A673 (cell line): ENCODE measurements at regions of chr19 and their contacts with region 1.

Region 1: GRCh38 chr19:49640113-49640898 is at the start of gene RRAS:
- DNase-seq: peak; percentile 100
- H3K4me3 ChIP-seq: peak within 1 kb of the TSS; percentile 59
- H3K27ac ChIP-seq: peak within 1 kb of the TSS; percentile 98
- H3K4me1 ChIP-seq: peaks cover 40% of the 10 kb centered on the region
- H3K27me3 ChIP-seq: no peaks in the 10 kb centered on the region
- CTCF ChIP-seq: no peak
- total RNA-seq, gene RRAS: 27.6 and 32.4 TPM in 2 replicates

Region 2: GRCh38 chr19:49624967-49625910 is 15.1 kb before region 1 on chr19:
- CTCF ChIA-PET with region 1: no interaction called
- POLR2A ChIA-PET with region 1: no interaction called
- intact Hi-C with region 1: no loop called
- DNase-seq: no peak
- H3K4me3 ChIP-seq: no peak overlapping the region
- H3K27ac ChIP-seq: no peak overlapping the region
- H3K4me1 ChIP-seq: no peaks in the 10 kb centered on the region
- H3K27me3 ChIP-seq: no peaks in the 10 kb centered on the region
- CTCF ChIP-seq: no peak

Region 3: DNA sequence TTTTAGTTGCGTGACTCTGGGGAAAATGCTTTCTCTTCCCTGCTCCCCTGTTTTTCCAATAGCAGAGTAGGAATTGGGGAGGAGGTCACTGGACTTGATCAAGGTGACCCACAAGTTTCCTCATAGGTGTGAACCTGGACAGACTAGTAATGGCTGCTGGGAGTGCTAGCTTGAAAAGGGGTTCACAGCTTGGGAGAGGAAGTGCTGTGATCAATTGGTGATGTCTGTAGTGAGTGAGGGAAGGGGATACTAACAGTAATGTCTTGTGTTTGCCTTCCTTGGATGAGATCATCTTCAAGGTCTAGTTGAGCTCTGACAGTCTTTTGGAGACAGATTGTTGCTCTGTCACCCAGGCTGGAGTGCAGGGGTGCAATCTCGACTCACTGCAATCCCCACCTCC is 27.2 kb after region 1 on chr19:
- CTCF ChIA-PET with region 1: interaction called, 3 read pairs
- POLR2A ChIA-PET with region 1: interaction called, 11 read pairs
- intact Hi-C with region 1: no loop called
- DNase-seq: no peak
- H3K4me3 ChIP-seq: no peak overlapping the region
- H3K27ac ChIP-seq: no peak overlapping the region
- H3K4me1 ChIP-seq: peaks cover 23% of the 10 kb centered on the region
- H3K27me3 ChIP-seq: no peaks in the 10 kb centered on the region
- CTCF ChIP-seq: no peak

Region 4: DNA sequence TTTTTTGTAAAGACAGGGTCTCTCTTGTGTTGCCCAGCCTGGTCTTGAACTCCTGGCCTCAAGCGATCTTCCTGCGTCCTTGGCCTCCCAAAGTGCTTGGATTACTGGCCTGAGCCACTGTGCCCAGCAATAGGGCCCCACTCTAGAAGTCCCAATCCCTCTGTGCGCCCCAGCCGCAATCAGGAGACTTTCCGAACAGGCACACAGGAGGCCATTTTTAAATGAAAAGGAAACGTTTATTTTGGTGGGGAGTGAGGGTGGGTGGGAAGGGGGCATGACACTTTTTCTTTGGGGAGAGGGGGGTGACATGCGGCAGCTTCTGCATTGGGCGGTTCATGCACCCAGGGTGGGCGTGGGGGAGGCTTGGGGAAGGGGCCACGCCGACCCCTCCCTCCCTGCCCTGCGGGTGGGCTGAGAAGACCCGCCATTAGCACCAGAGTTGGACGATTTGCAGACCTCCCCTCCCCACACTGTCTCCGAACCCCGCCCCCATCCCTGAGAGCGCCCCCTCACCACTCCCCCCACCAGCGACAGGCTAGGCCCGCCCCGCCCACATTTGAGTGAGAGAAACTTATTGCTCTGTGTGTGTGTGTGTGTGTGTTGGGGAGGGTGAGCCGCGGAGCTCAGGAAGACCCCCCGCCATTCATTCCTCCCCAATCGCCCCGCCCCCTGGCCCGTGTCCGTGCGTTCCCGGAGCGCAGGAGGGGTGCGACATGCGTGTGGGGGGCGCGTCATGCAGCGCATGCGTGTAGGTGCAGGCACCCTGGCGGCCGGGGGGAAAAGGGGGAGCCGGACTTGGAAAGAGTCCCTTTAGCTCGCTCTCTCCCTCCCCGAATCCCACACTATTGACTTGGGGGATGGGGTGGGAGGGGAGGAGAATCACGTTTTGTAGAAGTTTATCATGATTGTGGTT is 671.7 kb after region 1 on chr19:
- CTCF ChIA-PET with region 1: interaction called, 17 read pairs
- POLR2A ChIA-PET with region 1: no interaction called
- intact Hi-C with region 1: no loop called
- DNase-seq: peak; percentile 94
- H3K4me3 ChIP-seq: peak overlapping the region; percentile 32
- H3K27ac ChIP-seq: no peak overlapping the region
- H3K4me1 ChIP-seq: peaks cover 23% of the 10 kb centered on the region
- H3K27me3 ChIP-seq: peaks cover 18% of the 10 kb centered on the region
- CTCF ChIP-seq: 0 out of 2 replicates have a peak, but pooled peaks have one; percentile 12